ENCODE measurements at regions of chr2 and their contacts with region 1.

Region 1: GRCh38 chr2:85611705-85612587 is at the start of gene C2orf68:
- DNase-seq: peak; percentile 94
- ATAC-seq: peak; percentile 76
- H3K4me3 Mint-ChIP-seq: peak within 1 kb of the TSS; percentile 97
- H3K27ac Mint-ChIP-seq: peak within 1 kb of the TSS; percentile 96
- H3K4me1 Mint-ChIP-seq: peaks cover 14% of the 10 kb centered on the region
- H3K27me3 Mint-ChIP-seq: no peaks in the 10 kb centered on the region
- total RNA-seq, gene C2orf68: 33.7 to 47.2 TPM

Region 2: DNA sequence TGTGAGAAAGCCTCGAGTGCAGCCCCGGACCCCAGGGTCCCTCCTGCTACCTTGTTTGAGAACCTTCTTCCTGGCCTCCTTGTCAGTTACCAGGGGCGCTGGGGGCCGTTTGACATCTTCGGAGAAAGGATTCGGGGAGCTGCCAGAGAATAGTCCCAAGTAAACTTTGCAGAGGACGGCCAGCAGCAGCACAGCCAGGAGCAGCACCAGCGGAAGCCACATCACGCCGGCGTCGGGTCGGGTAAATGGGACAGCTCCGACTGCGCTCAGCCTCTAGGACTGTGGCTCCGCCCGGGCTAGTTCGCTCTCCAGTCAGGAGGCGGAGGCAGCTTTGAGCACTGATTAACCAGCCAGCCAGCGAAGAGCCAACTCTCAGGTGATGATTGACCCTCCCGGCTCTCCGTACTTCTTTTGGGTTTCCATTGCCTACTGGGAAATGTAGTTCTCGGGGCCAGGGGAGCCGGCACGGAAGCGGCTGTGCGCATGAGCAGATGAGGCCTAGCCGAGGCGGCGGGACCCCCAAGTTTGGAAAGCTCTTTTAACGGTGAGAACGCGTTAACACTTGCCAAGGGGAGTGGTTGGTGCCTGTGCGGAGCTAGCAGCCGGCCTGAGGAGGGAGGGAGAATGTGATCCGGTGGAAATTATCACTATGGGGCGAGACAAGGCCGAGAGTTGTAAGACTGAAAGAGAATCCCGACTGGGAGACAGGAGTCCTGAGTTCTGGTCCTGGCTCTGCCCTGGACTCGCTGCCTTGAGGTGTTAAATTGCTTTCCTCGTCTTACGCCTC is 257.5 kb before region 1 on chr2 and contains the starts of genes ELMOD3 and RETSAT:
- CTCF ChIA-PET with region 1: no interaction called
- POLR2A ChIA-PET with region 1: no interaction called
- intact Hi-C with region 1: loop called (anchors 1 kb)
- DNase-seq: peak; percentile 98
- ATAC-seq: peak; percentile 100
- H3K4me3 Mint-ChIP-seq: peak within 1 kb of the TSS; percentile 89
- H3K27ac Mint-ChIP-seq: peak within 1 kb of the TSS; percentile 99
- H3K4me1 Mint-ChIP-seq: peaks cover 34% of the 10 kb centered on the region
- H3K27me3 Mint-ChIP-seq: no peaks in the 10 kb centered on the region
- total RNA-seq, gene ELMOD3: 11.2 to 12.9 TPM
- total RNA-seq, gene RETSAT: 18.1 to 18.7 TPM

Region 3: GRCh38 chr2:85577386-85578242 is 34.3 kb before region 1 on chr2 and contains the start of gene VAMP8:
- CTCF ChIA-PET with region 1: interaction called, 5 read pairs
- POLR2A ChIA-PET with region 1: no interaction called
- intact Hi-C with region 1: loop called (anchors 2 to 5 kb)
- DNase-seq: peak; percentile 81
- ATAC-seq: peak; percentile 88
- H3K4me3 Mint-ChIP-seq: peak within 1 kb of the TSS; percentile 98
- H3K27ac Mint-ChIP-seq: peak within 1 kb of the TSS; percentile 91
- H3K4me1 Mint-ChIP-seq: peaks cover 25% of the 10 kb centered on the region
- H3K27me3 Mint-ChIP-seq: no peaks in the 10 kb centered on the region
- total RNA-seq, gene VAMP8: 98.3 to 106 TPM

Region 4: GRCh38 chr2:85642725-85643124 is 30.8 kb after region 1 on chr2:
- CTCF ChIA-PET with region 1: interaction called, 13 read pairs
- POLR2A ChIA-PET with region 1: interaction called, 5 read pairs
- intact Hi-C with region 1: no loop called
- DNase-seq: peak; percentile 30
- ATAC-seq: peak; percentile 82
- H3K4me3 Mint-ChIP-seq: no peak overlapping the region
- H3K27ac Mint-ChIP-seq: peak overlapping the region; percentile 27
- H3K4me1 Mint-ChIP-seq: peaks cover 14% of the 10 kb centered on the region
- H3K27me3 Mint-ChIP-seq: no peaks in the 10 kb centered on the region

Region 5: GRCh38 chr2:85865539-85866164 is 253.7 kb after region 1 on chr2:
- CTCF ChIA-PET with region 1: no interaction called
- POLR2A ChIA-PET with region 1: no interaction called
- intact Hi-C with region 1: no loop called
- DNase-seq: peak; percentile 61
- ATAC-seq: peak; percentile 89
- H3K4me3 Mint-ChIP-seq: no peak overlapping the region
- H3K27ac Mint-ChIP-seq: no peak overlapping the region
- H3K4me1 Mint-ChIP-seq: peaks cover 54% of the 10 kb centered on the region
- H3K27me3 Mint-ChIP-seq: no peaks in the 10 kb centered on the region

Region 6: GRCh38 chr2:86195055-86195807 is 583.3 kb after region 1 on chr2 and contains the start of gene IMMT:
- CTCF ChIA-PET with region 1: no interaction called
- POLR2A ChIA-PET with region 1: no interaction called
- intact Hi-C with region 1: loop called in 1 of 2 experiments (anchors 2 kb)
- DNase-seq: peak; percentile 97
- ATAC-seq: peak; percentile 93
- H3K4me3 Mint-ChIP-seq: peak within 1 kb of the TSS; percentile 81
- H3K27ac Mint-ChIP-seq: peak within 1 kb of the TSS; percentile 92
- H3K4me1 Mint-ChIP-seq: peaks cover 44% of the 10 kb centered on the region
- H3K27me3 Mint-ChIP-seq: no peaks in the 10 kb centered on the region
- total RNA-seq, gene IMMT: 172 to 182 TPM

Region 7: GRCh38 chr2:86562922-86563649 is 951.1 kb after region 1 on chr2 and contains the start of gene CHMP3:
- CTCF ChIA-PET with region 1: no interaction called
- POLR2A ChIA-PET with region 1: no interaction called
- intact Hi-C with region 1: loop called in 1 of 2 experiments (anchors 2 kb)
- DNase-seq: peak; percentile 97
- ATAC-seq: peak; percentile 92
- H3K4me3 Mint-ChIP-seq: peak within 1 kb of the TSS; percentile 95
- H3K27ac Mint-ChIP-seq: peak within 1 kb of the TSS; percentile 99
- H3K4me1 Mint-ChIP-seq: peaks cover 30% of the 10 kb centered on the region
- H3K27me3 Mint-ChIP-seq: no peaks in the 10 kb centered on the region
- total RNA-seq, gene CHMP3: 35.0 to 35.8 TPM